ENCODE measurements at regions of chr15 and their contacts with region 1.

Region 1: DNA sequence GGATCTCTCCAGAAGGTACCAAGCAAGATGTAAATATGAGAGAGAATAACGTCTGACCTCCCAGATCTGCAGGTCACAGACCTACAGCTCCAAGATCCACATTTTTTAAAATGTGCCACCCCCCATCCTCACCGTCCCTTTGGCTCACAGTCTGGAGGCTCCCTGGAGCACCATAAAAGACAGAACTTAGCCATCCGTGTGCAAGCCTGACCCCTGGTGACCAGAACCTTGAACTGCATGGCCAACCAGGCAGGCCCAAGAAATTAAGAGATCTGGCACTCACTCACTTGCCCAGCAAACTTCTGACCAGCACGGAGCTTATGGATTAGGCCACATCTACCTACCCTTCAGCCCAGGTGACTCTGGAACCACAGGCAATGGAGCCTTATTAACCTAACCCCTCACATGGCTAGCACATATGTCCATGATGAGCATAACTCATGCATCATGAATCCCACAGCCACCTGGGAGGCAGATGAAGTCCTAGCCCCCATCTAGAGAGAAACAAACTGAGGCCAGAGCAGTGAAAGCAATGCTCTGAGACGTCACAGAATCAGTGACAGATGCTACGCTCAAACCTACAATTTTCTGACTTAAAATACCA is 275.3 kb downstream of the UACA start:
- DNase-seq: peak; percentile 61 to 74 (median 62)
- H3K4me3 ChIP-seq: no peak overlapping the region
- H3K4me3 Mint-ChIP-seq: peak overlapping the region in 2 of 8 donors; percentile 2 to 15
- H3K27ac ChIP-seq: no peak overlapping the region
- H3K27ac Mint-ChIP-seq: peak overlapping the region in 1 of 7 donors; percentile 3
- H3K4me1 ChIP-seq: peaks cover 65% of the 10 kb centered on the region
- H3K4me1 Mint-ChIP-seq: peaks cover 41 to 85% (median 50%) of the 10 kb centered on the region in 4 donors
- H3K27me3 ChIP-seq: no peaks in the 10 kb centered on the region
- H3K27me3 Mint-ChIP-seq: peaks cover 2 to 10% of the 10 kb centered on the region in 2 donors

Region 2: GRCh38 chr15:69475769-69476358 is 1012.2 kb before region 1 on chr15:
- CTCF ChIA-PET with region 1: interaction called, 21 read pairs
- POLR2A ChIA-PET with region 1: no interaction called
- intact Hi-C with region 1: loop called (anchors 1 kb)
- DNase-seq: peak; percentile 64 to 73 (median 69)
- H3K4me3 ChIP-seq: no peak overlapping the region
- H3K4me3 Mint-ChIP-seq: no peak overlapping the region
- H3K27ac ChIP-seq: no peak overlapping the region
- H3K27ac Mint-ChIP-seq: no peak overlapping the region
- H3K4me1 ChIP-seq: peaks cover 4% of the 10 kb centered on the region
- H3K4me1 Mint-ChIP-seq: peaks cover 0 to 4% (median under 1%) of the 10 kb centered on the region in 4 donors
- H3K27me3 ChIP-seq: no peaks in the 10 kb centered on the region
- H3K27me3 Mint-ChIP-seq: peaks cover 0 to 1% of the 10 kb centered on the region in 2 donors

Region 3: DNA sequence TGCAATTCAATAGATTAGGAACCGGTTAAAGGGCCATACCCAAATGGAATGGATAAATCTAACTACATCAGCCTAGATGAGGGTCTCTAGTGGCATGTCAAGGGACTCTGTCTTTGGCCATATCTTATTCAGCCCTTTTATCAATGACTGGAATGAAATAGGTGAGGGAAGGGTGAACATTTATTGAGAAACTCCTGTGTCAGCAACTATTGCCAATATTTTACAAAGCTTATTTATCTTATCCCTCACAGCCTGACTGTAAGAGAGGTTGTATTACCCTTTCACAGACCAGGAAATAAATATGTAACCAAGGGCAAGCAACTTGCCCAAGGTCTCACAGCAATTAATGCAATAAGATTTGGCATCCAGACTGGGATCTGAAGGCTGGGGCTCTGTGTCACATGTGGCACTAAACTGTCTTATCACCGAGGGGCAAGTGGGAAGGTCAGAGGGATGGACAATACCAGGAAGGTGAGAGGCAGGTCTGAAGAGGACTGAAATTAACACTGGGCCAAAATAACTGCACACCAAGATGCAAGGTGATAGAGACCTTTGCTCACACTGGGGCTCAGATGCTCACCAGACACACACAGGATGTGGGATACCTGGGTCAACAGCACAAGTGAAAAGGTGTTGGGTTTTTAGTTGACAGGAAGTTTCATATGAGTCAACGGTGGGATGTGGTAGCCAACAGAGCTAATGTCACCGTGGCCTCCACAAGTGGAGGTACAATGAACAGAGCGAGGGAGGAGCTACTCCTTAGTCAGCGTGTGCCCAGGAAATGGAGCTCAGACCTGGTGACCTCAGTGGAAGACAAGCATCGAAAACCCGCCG is 774.2 kb before region 1 on chr15:
- CTCF ChIA-PET with region 1: interaction called, 4 read pairs
- POLR2A ChIA-PET with region 1: interaction called, 16 read pairs
- intact Hi-C with region 1: no loop called
- DNase-seq: peak; percentile 80 to 92 (median 85)
- H3K4me3 ChIP-seq: no peak overlapping the region
- H3K4me3 Mint-ChIP-seq: peak overlapping the region; percentile 54 to 88 (median 73)
- H3K27ac ChIP-seq: peak overlapping the region; percentile 11
- H3K27ac Mint-ChIP-seq: peak overlapping the region; percentile 81 to 95 (median 90)
- H3K4me1 ChIP-seq: peaks cover 73% of the 10 kb centered on the region
- H3K4me1 Mint-ChIP-seq: peaks cover 47 to 76% (median 64%) of the 10 kb centered on the region in 4 donors
- H3K27me3 ChIP-seq: no peaks in the 10 kb centered on the region
- H3K27me3 Mint-ChIP-seq: no peaks in the 10 kb centered on the region

Region 4: GRCh38 chr15:70210528-70210927 is 277.6 kb before region 1 on chr15:
- CTCF ChIA-PET with region 1: no interaction called
- POLR2A ChIA-PET with region 1: no interaction called
- intact Hi-C with region 1: no loop called
- DNase-seq: no peak
- H3K4me3 ChIP-seq: no peak overlapping the region
- H3K4me3 Mint-ChIP-seq: no peak overlapping the region
- H3K27ac ChIP-seq: no peak overlapping the region
- H3K27ac Mint-ChIP-seq: no peak overlapping the region
- H3K4me1 ChIP-seq: no peaks in the 10 kb centered on the region
- H3K4me1 Mint-ChIP-seq: no peaks in the 10 kb centered on the region
- H3K27me3 ChIP-seq: no peaks in the 10 kb centered on the region
- H3K27me3 Mint-ChIP-seq: no peaks in the 10 kb centered on the region

Region 5: DNA sequence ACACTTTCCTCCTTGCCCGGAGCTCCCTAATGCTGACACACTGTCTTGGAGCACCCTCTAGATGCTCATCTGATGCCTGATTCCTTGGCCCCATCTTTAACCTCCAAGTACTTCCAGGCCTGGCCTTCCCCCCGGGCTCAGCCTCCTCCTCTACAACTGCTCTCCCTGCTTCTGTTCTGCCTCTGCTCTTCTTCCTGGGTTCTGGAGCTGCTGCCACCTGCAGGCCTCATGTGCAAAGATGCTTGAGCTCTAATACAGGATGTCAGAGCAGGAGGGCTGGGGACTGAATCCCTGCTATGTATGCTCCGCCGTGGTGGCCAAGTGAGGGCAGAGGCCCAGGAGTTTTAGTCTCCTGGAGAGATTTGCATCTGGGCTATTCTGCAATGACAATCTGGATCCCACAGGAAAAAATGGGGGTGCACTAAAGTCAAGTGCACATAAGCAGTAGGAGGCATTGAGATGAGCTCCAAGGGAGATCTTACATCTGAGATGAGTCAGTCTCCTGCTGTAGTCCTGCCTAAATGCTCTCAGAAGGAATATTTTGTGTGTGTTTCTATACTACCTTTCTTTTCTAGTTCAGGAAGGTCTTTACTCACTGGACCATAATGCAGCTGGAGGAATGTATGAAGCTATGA is 21.1 kb before region 1 on chr15:
- CTCF ChIA-PET with region 1: interaction called, 109 read pairs
- POLR2A ChIA-PET with region 1: interaction called, 8 read pairs
- intact Hi-C with region 1: no loop called
- DNase-seq: peak in 4 of 5 donors; percentile 30 to 50 (median 46)
- H3K4me3 ChIP-seq: no peak overlapping the region
- H3K4me3 Mint-ChIP-seq: no peak overlapping the region
- H3K27ac ChIP-seq: no peak overlapping the region
- H3K27ac Mint-ChIP-seq: no peak overlapping the region
- H3K4me1 ChIP-seq: peaks cover 6% of the 10 kb centered on the region
- H3K4me1 Mint-ChIP-seq: peaks cover 4 to 5% (median 5%) of the 10 kb centered on the region in 4 donors
- H3K27me3 ChIP-seq: no peaks in the 10 kb centered on the region
- H3K27me3 Mint-ChIP-seq: peaks cover 0 to 8% of the 10 kb centered on the region in 2 donors

Region 6: DNA sequence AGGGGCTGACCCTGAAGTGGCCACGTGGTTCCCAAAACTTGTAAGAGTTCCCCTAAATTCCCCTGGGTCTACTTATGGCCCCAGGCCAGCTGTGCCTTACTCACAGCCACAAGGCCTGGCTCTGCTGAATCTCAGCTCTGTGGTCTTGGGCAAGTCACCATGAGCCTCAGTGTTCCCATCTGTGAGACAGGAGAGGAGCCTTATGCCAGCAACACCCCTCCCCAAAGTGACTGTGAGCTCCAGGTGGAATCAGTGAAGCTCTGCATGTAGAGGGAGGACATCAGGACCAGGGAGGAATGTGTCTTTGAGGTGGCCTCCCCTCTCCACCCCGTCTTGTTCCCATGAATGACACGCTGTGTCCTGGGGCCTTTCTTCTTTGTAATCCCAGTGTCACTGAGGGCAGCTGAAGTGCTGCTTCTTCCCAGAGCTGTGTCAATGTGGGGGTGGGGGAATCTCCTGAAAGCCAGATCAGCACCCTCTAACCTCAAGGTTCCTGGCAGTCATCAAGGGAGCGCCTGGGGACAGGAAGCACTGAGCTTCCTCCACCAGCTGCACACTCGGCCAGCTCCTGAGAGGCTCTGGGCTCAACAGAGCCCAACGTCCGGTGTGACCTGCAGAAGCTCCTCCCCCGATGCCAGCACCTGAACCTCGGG is 16.3 kb after region 1 on chr15:
- CTCF ChIA-PET with region 1: interaction called, 36 read pairs
- POLR2A ChIA-PET with region 1: interaction called, 39 read pairs
- intact Hi-C with region 1: no loop called
- DNase-seq: no peak
- H3K4me3 ChIP-seq: peak overlapping the region in 1 of 2 donors; percentile 2
- H3K4me3 Mint-ChIP-seq: peak overlapping the region in 7 of 8 donors; percentile 54 to 76 (median 59)
- H3K27ac ChIP-seq: no peak overlapping the region
- H3K27ac Mint-ChIP-seq: peak overlapping the region in 1 of 7 donors; percentile 8
- H3K4me1 ChIP-seq: peaks cover 62% of the 10 kb centered on the region
- H3K4me1 Mint-ChIP-seq: peaks cover 36 to 68% (median 51%) of the 10 kb centered on the region in 4 donors
- H3K27me3 ChIP-seq: no peaks in the 10 kb centered on the region
- H3K27me3 Mint-ChIP-seq: no peaks in the 10 kb centered on the region

Region 7: DNA sequence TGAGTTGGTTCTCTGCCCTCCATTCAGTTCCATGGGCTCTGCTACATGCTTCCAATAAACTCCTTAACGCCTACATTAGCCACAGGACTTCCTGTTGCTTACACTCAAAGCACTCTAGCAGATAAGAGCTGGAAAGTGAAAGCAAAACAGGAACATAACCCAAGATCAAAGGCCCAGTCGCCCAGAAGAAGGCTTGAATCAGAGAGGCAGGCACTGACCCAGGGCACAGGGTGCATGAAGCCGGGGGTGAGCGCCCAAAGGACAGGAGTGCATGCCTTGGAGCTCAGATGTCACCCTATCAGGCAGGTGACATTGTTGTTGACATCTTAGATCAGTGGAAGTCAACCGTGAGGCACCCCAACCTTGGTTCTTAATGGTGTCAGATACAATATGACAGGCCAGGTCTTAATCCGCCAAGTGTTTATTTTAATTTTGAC is 40.2 kb after region 1 on chr15:
- CTCF ChIA-PET with region 1: interaction called, 4 read pairs
- POLR2A ChIA-PET with region 1: interaction called, 24 read pairs
- intact Hi-C with region 1: loop called (anchors 1 kb)
- DNase-seq: peak; percentile 74 to 80 (median 77)
- H3K4me3 ChIP-seq: peak overlapping the region; percentile 8 to 39
- H3K4me3 Mint-ChIP-seq: peak overlapping the region; percentile 69 to 85 (median 76)
- H3K27ac ChIP-seq: peak overlapping the region; percentile 32
- H3K27ac Mint-ChIP-seq: peak overlapping the region; percentile 74 to 97 (median 88)
- H3K4me1 ChIP-seq: peaks cover 56% of the 10 kb centered on the region
- H3K4me1 Mint-ChIP-seq: peaks cover 45 to 79% (median 61%) of the 10 kb centered on the region in 4 donors
- H3K27me3 ChIP-seq: no peaks in the 10 kb centered on the region
- H3K27me3 Mint-ChIP-seq: no peaks in the 10 kb centered on the region

Region 8: GRCh38 chr15:70559265-70560239 is 71.4 kb after region 1 on chr15:
- CTCF ChIA-PET with region 1: interaction called, 7 read pairs
- POLR2A ChIA-PET with region 1: interaction called, 9 read pairs
- intact Hi-C with region 1: loop called (anchors 1 kb)
- DNase-seq: peak; percentile 72 to 87 (median 75)
- H3K4me3 ChIP-seq: peak overlapping the region; percentile 28 to 31
- H3K4me3 Mint-ChIP-seq: peak overlapping the region in 1 of 8 donors; percentile 6
- H3K27ac ChIP-seq: no peak overlapping the region
- H3K27ac Mint-ChIP-seq: peak overlapping the region in 4 of 7 donors; percentile 26 to 82 (median 32)
- H3K4me1 ChIP-seq: peaks cover 64% of the 10 kb centered on the region
- H3K4me1 Mint-ChIP-seq: peaks cover 0 to 13% (median 4%) of the 10 kb centered on the region in 4 donors
- H3K27me3 ChIP-seq: no peaks in the 10 kb centered on the region
- H3K27me3 Mint-ChIP-seq: no peaks in the 10 kb centered on the region

Measured in CD4-positive, alpha-beta memory T cell (primary cell).